Esophagus squamous epithelium (tissue), 5 donors: ENCODE measurements at regions of chr7 and their contacts with region 1.

Region 1: GRCh38 chr7:97835296-97836138 is 36.7 kb downstream of the ASNS start:
- DNase-seq: no peak
- H3K4me3 ChIP-seq: no peak overlapping the region
- H3K27ac ChIP-seq: no peak overlapping the region
- H3K4me1 ChIP-seq: no peaks in the 10 kb centered on the region
- H3K27me3 ChIP-seq: peaks cover 0 to 24% (median 0%) of the 10 kb centered on the region in 4 donors
- CTCF ChIP-seq: peak in 5 of 6 experiments; percentile 34 to 57 (median 50)
- POLR2A ChIP-seq: no peak

Region 2: DNA sequence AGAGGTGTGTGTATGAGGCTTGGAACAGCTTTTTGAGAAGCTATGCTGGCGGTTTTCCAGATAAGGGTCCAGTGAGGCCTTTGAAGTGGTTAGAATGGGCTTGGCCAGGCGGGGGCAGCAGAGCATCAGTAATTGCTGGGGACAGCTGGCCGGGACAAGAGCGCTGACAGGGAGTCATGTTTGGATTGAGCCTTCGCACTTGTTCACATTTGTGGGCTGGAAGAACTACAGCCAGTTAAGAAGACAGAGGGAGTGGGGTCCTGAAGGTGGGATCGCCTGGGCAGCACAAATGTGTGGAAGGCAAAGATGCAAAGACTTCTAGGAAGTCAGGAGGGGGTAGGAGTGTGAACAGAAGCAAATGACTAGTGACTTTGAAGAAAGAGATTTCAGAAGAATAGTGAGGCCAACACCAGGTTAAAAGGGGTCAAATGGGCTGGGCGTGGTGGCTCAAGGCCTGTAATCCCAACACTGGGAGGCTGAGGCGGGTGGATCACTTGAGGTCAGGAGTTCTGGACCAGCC is 730.7 kb before region 1 on chr7:
- intact Hi-C with region 1: loop called (anchors 10 kb)
- DNase-seq: peak; percentile 4
- H3K4me3 ChIP-seq: no peak overlapping the region
- H3K27ac ChIP-seq: no peak overlapping the region
- H3K4me1 ChIP-seq: peaks cover 0 to 8% (median 0%) of the 10 kb centered on the region in 3 donors
- H3K27me3 ChIP-seq: peaks cover 0 to 11% (median 0%) of the 10 kb centered on the region in 4 donors
- CTCF ChIP-seq: peak; percentile 42 to 81 (median 67)
- POLR2A ChIP-seq: no peak

Region 3: DNA sequence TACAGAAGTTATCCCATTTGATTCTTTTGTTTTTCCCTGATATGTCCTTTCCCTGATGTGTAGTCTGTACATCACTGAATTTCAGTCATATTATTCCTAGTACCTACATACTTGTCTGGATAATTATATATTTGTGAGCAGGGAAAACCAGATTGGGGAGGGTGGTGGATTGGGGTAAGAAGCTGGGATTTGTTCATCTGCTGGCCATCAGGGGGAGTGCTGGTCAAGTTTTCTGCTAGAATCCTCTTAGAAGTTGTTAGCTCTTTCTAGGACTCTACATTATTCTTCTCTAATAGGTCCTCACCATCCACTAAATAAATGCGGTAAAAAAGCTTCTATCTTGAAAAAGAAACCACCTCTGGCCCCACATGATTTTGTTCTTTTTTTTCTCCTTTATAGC is 336.3 kb before region 1 on chr7:
- intact Hi-C with region 1: loop called (anchors 10 kb)
- DNase-seq: no peak
- H3K4me3 ChIP-seq: no peak overlapping the region
- H3K27ac ChIP-seq: no peak overlapping the region
- H3K4me1 ChIP-seq: no peaks in the 10 kb centered on the region
- H3K27me3 ChIP-seq: no peaks in the 10 kb centered on the region
- CTCF ChIP-seq: peak in 2 of 6 experiments; percentile 13 to 34
- POLR2A ChIP-seq: no peak

Region 4: GRCh38 chr7:98724591-98724990 is 889.1 kb after region 1 on chr7:
- intact Hi-C with region 1: no loop called
- DNase-seq: no peak
- H3K4me3 ChIP-seq: no peak overlapping the region
- H3K27ac ChIP-seq: no peak overlapping the region
- H3K4me1 ChIP-seq: no peaks in the 10 kb centered on the region
- H3K27me3 ChIP-seq: peaks cover 0 to 11% (median 0%) of the 10 kb centered on the region in 4 donors
- CTCF ChIP-seq: no peak
- POLR2A ChIP-seq: no peak